Posterior cingulate gyrus (tissue), 11 donors: ENCODE measurements at regions of chr2 and their contacts with region 1.

Region 1: GRCh38 chr2:85437488-85438284 is 19.2 kb downstream of the SH2D6 start:
- DNase-seq: peak; percentile 76 to 98 (median 88)

Region 2: DNA sequence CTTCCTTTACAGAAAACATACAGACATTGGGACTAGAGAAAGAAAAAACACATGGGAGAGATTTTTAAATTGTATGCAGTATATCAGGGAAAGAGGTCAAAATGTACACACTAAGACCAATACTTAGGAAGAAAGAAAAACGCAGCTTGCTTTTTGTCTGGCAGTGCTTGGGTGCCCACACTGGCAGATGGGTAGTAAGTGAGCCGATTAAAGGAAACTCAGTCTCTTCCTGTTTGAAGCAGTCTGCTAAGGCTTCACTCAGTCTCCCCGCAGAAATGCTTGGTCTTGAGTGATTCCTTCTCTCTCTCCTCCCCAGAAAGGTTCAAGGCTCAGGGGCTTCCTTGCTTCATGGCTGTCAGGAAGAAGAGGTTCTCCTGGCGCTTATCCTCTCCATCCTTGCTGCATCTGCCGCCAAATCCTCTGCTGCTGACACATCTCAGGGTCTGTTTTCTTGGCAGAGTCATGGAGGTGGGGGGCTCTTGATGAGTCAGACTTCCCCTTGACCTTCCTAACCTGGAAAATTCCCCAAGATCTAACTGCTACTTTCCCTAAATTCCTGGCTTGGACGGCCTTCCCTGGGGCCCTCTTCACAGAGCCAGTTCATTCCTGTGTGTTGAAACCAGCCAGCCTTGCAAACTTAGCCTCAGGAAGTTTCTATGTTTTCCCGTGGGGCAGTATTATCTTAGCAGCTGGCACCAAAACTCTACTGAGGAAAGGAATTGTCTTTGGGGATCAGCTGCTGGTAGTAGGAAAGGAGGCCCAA is 542.7 kb before region 1 on chr2:
- intact Hi-C with region 1: no loop called
- DNase-seq: no peak

Region 3: GRCh38 chr2:85538486-85539360 is 101.0 kb after region 1 on chr2 and contains the start of gene MAT2A:
- intact Hi-C with region 1: loop called (anchors 2 kb)
- DNase-seq: peak; percentile 88 to 99 (median 92)